ENCODE measurements at regions of chr22 and their contacts with region 1.

Region 1: GRCh38 chr22:21014202-21014725 is 701 bp upstream of the P2RX6 start:
- DNase-seq: peak; percentile 96
- H3K4me3 ChIP-seq: peak overlapping the region; percentile 76 to 78
- H3K27ac ChIP-seq: peak overlapping the region; percentile 71 to 97
- H3K4me1 ChIP-seq: peaks cover 15 to 45% of the 10 kb centered on the region in 2 experiments; a peak in 3 of 4 replicates
- H3K27me3 ChIP-seq: no peaks in the 10 kb centered on the region
- CTCF ChIP-seq: no peak
- EP300 ChIP-seq: peak in 1 of 2 experiments; percentile 42; a peak in 1 of 4 replicates
- RAD21 ChIP-seq: no peak; the same call in 1 of the 2 replicates

Region 2: DNA sequence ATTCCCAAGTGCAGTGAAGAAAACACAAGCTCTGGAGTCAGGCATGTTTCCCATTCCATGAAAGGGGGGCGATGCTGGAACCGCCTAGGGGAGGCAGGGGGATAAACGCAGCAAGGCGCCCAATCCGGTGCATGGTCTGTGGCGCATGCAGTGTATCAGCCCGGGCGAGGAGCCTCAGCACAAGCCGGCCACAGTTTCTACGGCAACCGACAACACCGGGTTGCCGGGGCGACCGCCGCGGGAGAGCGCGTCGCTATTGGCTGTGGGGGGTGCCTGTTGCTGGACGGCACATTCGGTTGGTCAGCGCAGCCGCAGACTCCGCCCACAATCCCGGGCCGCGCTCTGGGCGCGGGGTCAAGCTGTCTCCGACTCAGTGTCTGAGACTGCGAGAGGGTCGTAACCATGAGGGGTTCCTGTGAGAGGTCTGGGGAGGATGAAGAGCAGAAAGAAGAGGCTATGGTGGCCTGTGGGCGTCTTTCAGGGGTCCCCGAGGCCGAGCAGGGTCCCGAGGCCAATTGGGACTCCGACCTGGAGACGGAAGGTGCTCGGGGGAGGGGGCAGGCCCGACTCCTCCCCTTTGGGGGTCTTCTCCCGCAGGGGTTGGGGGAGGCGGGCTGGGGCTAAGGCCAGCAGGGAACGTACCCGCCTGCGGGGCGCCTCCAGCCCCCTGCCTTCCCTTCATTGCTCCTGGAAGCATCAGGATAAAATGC is 31.5 kb after region 1 on chr22 and contains the start of gene LRRC74B:
- CTCF ChIA-PET with region 1: interaction called, 3 read pairs
- POLR2A ChIA-PET with region 1: interaction called, 11 read pairs
- DNase-seq: peak; percentile 97
- H3K4me3 ChIP-seq: peak within 1 kb of the TSS; percentile 60 to 65
- H3K27ac ChIP-seq: peak within 1 kb of the TSS; percentile 73 to 88
- H3K4me1 ChIP-seq: peaks cover 9 to 36% of the 10 kb centered on the region in 2 experiments; a peak in 3 of 4 replicates
- H3K27me3 ChIP-seq: no peaks in the 10 kb centered on the region
- CTCF ChIP-seq: no peak
- EP300 ChIP-seq: no peak
- RAD21 ChIP-seq: no peak
- polyA plus RNA-seq, gene LRRC74B: 0.02 and 0.03 TPM in 2 replicates

Region 3: GRCh38 chr22:21055587-21056319 is 41.5 kb after region 1 on chr22:
- CTCF ChIA-PET with region 1: no interaction called
- POLR2A ChIA-PET with region 1: no interaction called
- DNase-seq: no peak
- H3K4me3 ChIP-seq: no peak overlapping the region
- H3K27ac ChIP-seq: no peak overlapping the region
- H3K4me1 ChIP-seq: no peaks in the 10 kb centered on the region
- H3K27me3 ChIP-seq: no peaks in the 10 kb centered on the region
- CTCF ChIP-seq: no peak
- EP300 ChIP-seq: no peak
- RAD21 ChIP-seq: no peak